ENCODE measurements at regions of chr10 and their contacts with region 1.

Region 1: DNA sequence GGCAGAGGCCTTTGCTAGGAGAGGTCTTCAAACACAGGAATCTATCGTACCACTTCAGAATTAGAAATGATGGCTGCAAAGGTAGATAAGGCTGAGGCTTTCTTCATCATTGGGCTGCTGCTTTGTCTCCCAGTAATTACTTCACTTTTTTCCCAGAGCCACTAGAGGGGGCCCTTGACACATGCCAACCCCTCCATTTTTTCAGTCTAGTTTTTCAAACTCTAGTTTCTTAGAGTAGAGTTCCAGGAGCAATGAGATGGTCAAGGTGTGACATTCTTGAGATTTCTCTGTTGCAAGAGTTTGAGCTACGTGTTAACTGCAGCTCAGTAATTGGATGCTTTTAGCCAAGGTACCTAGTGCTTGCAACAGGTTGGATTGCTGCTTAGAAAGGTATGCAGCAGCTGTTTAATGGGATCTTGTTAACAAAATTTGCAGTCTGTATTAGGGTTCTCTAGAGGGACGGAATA is 33.8 kb upstream of the RBM20 start:
- DNase-seq: peak; percentile 24
- ATAC-seq: peak; percentile 10; the same call in 2 of the 3 replicates
- H3K4me3 ChIP-seq: no peak overlapping the region
- H3K27ac ChIP-seq: no peak overlapping the region
- H3K4me1 ChIP-seq: peaks cover 31% of the 10 kb centered on the region
- H3K27me3 ChIP-seq: no peaks in the 10 kb centered on the region
- CTCF ChIP-seq: peak; percentile 85 to 92 (median 88)
- EP300 ChIP-seq: no peak
- POLR2A ChIP-seq: no peak
- RAD21 ChIP-seq: peak; percentile 98

Region 2: GRCh38 chr10:110304780-110305421 is 305.4 kb before region 1 on chr10 and contains the start of gene SMNDC1:
- CTCF ChIA-PET with region 1: interaction called, 15 read pairs
- POLR2A ChIA-PET with region 1: interaction called, 3 read pairs
- RAD21 ChIA-PET with region 1: interaction called, 12 read pairs
- SMC1A ChIA-PET with region 1: interaction called, 10 read pairs
- in situ Hi-C with region 1: no loop called
- intact Hi-C with region 1: no loop called
- DNase-seq: peak; percentile 89
- ATAC-seq: peak; percentile 91
- H3K4me3 ChIP-seq: peak within 1 kb of the TSS; percentile 81
- H3K27ac ChIP-seq: peak within 1 kb of the TSS; percentile 88
- H3K4me1 ChIP-seq: peaks cover 7% of the 10 kb centered on the region; the same call in 1 of the 2 replicates
- H3K27me3 ChIP-seq: no peaks in the 10 kb centered on the region
- CTCF ChIP-seq: no peak
- EP300 ChIP-seq: no peak
- POLR2A ChIP-seq: peak; percentile 88
- RAD21 ChIP-seq: no peak
- polyA plus RNA-seq, gene SMNDC1: 10.1 to 12.9 TPM

Region 3: DNA sequence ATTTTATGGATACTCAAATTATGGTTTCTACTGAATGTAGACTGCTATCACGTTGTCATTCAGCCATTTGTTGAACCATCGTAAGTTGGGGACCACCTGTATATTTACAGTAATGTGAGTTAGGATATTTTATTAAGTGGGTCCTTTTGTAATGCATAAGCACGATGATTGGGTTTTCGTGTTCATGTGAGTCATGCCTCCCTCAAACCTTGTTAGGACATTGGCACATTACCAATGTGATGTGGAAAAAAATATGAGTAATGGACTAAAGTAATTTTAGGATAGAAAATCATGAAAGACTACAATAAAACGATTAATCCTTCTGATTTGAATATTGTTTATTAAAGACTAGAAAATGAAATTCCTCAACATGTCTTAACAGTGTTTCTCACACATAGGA is 34.1 kb before region 1 on chr10:
- CTCF ChIA-PET with region 1: interaction called, 16 read pairs
- POLR2A ChIA-PET with region 1: no interaction called
- RAD21 ChIA-PET with region 1: interaction called, 3 read pairs
- SMC1A ChIA-PET with region 1: interaction called, 5 read pairs
- in situ Hi-C with region 1: no loop called
- intact Hi-C with region 1: no loop called
- DNase-seq: no peak
- ATAC-seq: no peak
- H3K4me3 ChIP-seq: no peak overlapping the region
- H3K27ac ChIP-seq: no peak overlapping the region
- H3K4me1 ChIP-seq: no peaks in the 10 kb centered on the region; the same call in 1 of the 2 replicates
- H3K27me3 ChIP-seq: no peaks in the 10 kb centered on the region
- CTCF ChIP-seq: no peak
- EP300 ChIP-seq: no peak
- POLR2A ChIP-seq: no peak
- RAD21 ChIP-seq: no peak

Region 4: GRCh38 chr10:110671788-110672579 is 61.6 kb after region 1 on chr10:
- CTCF ChIA-PET with region 1: interaction called, 141 read pairs
- POLR2A ChIA-PET with region 1: interaction called, 6 read pairs
- RAD21 ChIA-PET with region 1: interaction called, 50 read pairs
- SMC1A ChIA-PET with region 1: interaction called, 98 read pairs
- in situ Hi-C with region 1: no loop called
- intact Hi-C with region 1: loop called (anchors 2 kb)
- DNase-seq: peak; percentile 27
- ATAC-seq: peak; percentile 99
- H3K4me3 ChIP-seq: peak overlapping the region; percentile 74
- H3K27ac ChIP-seq: peak overlapping the region; percentile 62
- H3K4me1 ChIP-seq: no peaks in the 10 kb centered on the region
- H3K27me3 ChIP-seq: no peaks in the 10 kb centered on the region
- CTCF ChIP-seq: peak; percentile 99 to 100 (median 99)
- EP300 ChIP-seq: no peak
- POLR2A ChIP-seq: peak; percentile 80
- RAD21 ChIP-seq: peak; percentile 64

Region 5: DNA sequence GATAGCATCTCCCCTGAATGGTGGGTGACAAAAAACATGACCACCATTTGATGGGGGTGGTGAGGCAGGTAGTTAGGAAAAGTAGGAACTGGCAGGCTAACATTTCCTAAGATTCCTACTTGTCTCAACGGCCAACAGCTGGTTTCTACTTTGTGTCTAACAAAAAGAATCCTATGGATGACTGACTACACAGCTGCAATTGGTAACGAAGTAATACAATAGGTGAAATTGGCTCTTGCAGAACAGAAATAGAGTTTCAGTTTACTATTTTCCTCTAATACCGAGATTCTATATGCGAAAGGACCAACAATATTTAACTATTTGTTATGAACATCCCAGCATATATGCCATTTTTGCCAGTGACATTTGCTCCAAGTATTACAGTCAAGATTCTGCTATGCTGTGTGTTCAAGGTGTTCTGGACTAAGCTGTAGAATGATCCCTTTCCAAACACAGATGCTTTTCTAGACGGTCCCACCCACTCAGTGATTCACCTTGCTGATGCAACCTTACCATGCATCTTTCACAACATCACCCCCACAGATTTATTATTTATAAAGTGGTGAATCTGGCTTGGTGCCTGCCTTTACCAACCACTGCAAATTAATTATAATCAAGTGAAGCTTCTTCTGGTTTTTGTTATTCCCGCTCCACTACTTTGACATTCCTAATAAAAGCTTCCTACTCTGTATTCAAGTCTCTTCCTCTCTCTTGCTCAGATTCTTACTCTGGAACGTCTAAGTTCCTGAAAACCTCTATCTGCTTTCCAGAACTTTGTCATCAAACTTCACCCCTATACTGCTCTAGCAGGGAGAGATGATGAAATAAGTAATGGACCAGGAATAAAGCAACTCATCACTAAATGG is 291.8 kb after region 1 on chr10:
- CTCF ChIA-PET with region 1: interaction called, 6 read pairs
- POLR2A ChIA-PET with region 1: interaction called, 3 read pairs
- RAD21 ChIA-PET with region 1: no interaction called
- SMC1A ChIA-PET with region 1: interaction called, 3 read pairs
- in situ Hi-C with region 1: loop called (anchors 5 kb)
- intact Hi-C with region 1: loop called (anchors 5 kb)
- DNase-seq: no peak
- ATAC-seq: peak; percentile 49
- H3K4me3 ChIP-seq: no peak overlapping the region
- H3K27ac ChIP-seq: no peak overlapping the region
- H3K4me1 ChIP-seq: peaks cover 7% of the 10 kb centered on the region; the same call in 1 of the 2 replicates
- H3K27me3 ChIP-seq: no peaks in the 10 kb centered on the region
- CTCF ChIP-seq: no peak
- EP300 ChIP-seq: no peak
- POLR2A ChIP-seq: peak; percentile 12; the same call in 1 of the 2 replicates
- RAD21 ChIP-seq: no peak